Activated B cell treated with CpG ODN at 0.5 μM for 24 hours (primary cell): ENCODE measurements at regions of chr9 and their contacts with region 1.

Region 1: DNA sequence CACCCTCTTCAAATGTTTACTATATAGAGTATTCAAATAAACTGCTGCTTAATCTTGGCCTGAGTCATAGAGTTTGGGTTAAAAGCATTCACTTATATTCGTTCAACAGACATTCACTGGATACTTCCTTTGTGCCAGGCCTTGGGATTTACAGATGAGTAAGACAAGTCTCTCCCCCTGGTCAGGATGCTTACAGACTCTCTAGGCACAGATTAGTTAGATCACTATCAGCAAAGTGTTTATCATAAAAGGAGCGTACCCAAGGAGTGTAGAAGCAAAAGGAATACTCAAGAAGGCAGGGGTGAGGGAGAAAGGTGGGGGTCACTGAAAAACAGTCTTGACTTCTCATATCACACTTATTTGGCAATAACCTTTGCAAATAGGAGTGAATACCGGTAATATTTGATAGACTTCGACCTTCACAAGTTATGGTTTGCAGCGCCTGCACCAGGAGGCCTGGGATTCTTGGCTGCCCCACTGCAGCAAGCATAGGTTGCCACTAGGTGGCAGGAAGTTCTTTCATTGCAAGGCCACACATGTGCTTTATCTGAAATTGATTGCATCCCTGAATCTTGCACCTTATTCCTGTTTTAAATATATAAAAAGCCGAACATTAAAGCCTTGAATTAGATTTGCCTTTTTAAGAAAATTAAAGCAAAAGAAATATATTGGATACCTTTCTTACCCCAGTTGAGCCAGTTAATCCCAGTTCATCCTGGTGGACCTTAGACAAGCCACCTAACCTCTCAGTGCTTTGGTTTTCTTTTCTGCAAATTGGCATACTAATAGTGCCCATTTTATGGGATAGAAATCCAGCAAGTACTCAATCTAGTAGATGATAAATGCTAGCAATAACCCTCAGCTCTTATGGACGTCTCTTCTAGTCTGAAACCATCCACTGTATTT is 6.5 kb upstream of the TRMT10B start:
- DNase-seq: peak; percentile 27
- ATAC-seq: peak; percentile 81
- H3K4me3 Mint-ChIP-seq: no peak overlapping the region
- H3K27ac Mint-ChIP-seq: no peak overlapping the region
- H3K4me1 Mint-ChIP-seq: no peaks in the 10 kb centered on the region
- H3K27me3 Mint-ChIP-seq: no peaks in the 10 kb centered on the region
- CTCF ChIP-seq: peak; percentile 28

Region 2: DNA sequence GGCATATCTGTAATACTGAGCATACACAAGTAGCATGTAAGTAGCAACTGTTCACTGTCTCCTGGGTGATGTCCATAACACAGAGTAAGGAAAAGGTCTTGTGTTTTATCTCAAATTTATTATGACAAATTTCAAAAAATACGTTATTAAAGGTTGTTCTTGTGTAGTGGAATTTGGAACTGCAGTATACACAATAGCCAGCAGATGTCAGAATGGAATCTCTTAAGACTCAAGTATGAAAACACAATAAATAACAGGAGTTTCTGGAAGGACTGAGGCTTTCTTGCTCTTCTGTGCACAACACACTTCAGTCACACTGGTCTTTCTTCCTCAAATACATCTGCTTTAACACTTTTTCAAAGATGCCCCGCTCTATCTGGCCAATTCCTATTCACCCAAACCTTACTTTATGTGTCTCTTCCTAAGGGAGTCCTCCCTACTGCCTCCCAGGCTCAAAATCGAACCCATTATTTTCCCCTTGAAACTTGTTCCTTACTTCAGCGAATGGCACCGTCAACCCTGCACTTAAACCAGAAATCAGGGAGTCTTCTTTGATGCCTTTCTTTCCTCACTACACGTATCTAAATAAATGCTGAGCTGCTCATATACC is 164.4 kb before region 1 on chr9:
- CTCF ChIA-PET with region 1: no interaction called
- POLR2A ChIA-PET with region 1: no interaction called
- intact Hi-C with region 1: loop called (anchors 2 kb)
- DNase-seq: no peak
- ATAC-seq: peak; percentile 69
- H3K4me3 Mint-ChIP-seq: no peak overlapping the region
- H3K27ac Mint-ChIP-seq: peak overlapping the region; percentile 47
- H3K4me1 Mint-ChIP-seq: peaks cover 21% of the 10 kb centered on the region
- H3K27me3 Mint-ChIP-seq: no peaks in the 10 kb centered on the region
- CTCF ChIP-seq: no peak

Region 3: DNA sequence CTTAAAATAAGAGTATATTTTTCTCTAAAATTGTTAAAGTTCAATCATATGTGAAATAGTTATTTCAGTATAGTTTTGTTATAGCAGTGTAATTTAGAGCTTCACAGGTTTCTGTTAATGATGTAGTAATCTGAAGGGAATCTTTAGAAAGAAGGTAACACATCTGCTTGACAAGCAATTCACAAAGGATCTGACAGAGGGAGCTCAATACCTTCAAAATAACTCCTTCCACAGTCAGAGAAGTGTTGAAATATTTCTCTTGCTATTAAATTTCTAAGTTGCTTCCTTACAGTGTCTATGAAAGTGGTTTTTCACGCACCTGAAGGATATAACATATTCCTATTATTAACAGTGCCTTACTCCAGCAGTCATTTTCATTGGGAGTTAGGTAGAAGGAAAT is 111.9 kb after region 1 on chr9:
- CTCF ChIA-PET with region 1: no interaction called
- POLR2A ChIA-PET with region 1: no interaction called
- intact Hi-C with region 1: no loop called
- DNase-seq: no peak
- ATAC-seq: no peak
- H3K4me3 Mint-ChIP-seq: no peak overlapping the region
- H3K27ac Mint-ChIP-seq: no peak overlapping the region
- H3K4me1 Mint-ChIP-seq: no peaks in the 10 kb centered on the region
- H3K27me3 Mint-ChIP-seq: no peaks in the 10 kb centered on the region
- CTCF ChIP-seq: no peak

Region 4: GRCh38 chr9:38160613-38161215 is 413.6 kb after region 1 on chr9:
- CTCF ChIA-PET with region 1: no interaction called
- POLR2A ChIA-PET with region 1: no interaction called
- intact Hi-C with region 1: loop called (anchors 2 kb)
- DNase-seq: peak; percentile 25
- ATAC-seq: no peak
- H3K4me3 Mint-ChIP-seq: no peak overlapping the region
- H3K27ac Mint-ChIP-seq: no peak overlapping the region
- H3K4me1 Mint-ChIP-seq: no peaks in the 10 kb centered on the region
- H3K27me3 Mint-ChIP-seq: peaks cover 10% of the 10 kb centered on the region
- CTCF ChIP-seq: peak; percentile 42